ENCODE measurements at regions of chr6 and their contacts with region 1.

Region 1: GRCh38 chr6:25027221-25027916 is 91.6 kb upstream of the RIPOR2 start:
- DNase-seq: peak; percentile 83
- ATAC-seq: peak; percentile 95
- H3K4me3 ChIP-seq: peak overlapping the region in 4 of 5 experiments; percentile 14 to 56 (median 46)
- H3K4me3 Mint-ChIP-seq: peak overlapping the region; percentile 90
- H3K27ac ChIP-seq: peak overlapping the region; percentile 60 to 63
- H3K27ac Mint-ChIP-seq: peak overlapping the region; percentile 90
- H3K4me1 ChIP-seq: peaks cover 16 to 18% of the 10 kb centered on the region in 2 donors
- H3K4me1 Mint-ChIP-seq: peaks cover 40% of the 10 kb centered on the region
- H3K27me3 ChIP-seq: no peaks in the 10 kb centered on the region
- H3K27me3 Mint-ChIP-seq: no peaks in the 10 kb centered on the region
- CTCF ChIP-seq: peak; percentile 65

Region 2: DNA sequence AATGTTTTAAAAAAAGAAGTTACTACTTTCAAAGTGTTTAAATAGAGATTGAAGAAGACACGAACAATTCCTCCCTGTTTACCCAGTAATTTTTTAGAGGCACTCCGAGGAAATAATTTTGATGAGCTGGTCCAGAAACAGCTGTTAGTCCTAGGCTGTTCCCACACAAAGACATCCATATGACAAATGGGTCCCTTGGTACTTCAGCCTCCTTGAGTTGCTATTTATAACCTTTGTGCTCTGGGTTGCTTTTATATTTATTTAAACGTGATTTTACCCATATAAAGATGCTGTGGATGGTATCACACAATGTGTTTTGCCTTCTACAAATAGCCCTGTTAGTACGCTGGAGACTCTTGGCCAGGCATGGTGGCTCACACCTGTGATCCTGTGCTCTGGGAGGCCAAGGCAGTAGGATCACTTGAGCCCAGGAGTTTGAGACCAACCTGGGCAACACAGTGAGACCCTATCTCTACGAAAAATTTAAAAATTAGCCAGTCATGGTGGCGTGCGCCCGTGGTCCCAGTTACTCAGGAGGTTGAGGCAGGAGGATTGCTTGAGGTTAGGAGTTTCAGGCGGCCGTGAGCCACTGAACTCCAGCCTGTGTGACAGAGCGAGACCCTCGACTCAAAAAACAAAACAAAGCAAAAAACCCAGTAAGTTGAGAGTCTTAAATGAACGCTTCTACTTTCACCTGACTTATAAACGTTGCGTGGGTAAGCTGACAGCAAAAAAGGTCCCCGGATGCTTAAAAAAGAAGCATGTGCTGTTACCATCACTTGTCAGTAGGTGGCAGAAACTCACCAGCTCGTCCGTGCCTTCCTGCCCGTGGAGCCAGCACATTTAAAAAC is 171.7 kb before region 1 on chr6:
- CTCF ChIA-PET with region 1: interaction called, 82 read pairs
- POLR2A ChIA-PET with region 1: no interaction called
- intact Hi-C with region 1: no loop called
- DNase-seq: peak; percentile 86
- ATAC-seq: peak; percentile 42
- H3K4me3 ChIP-seq: no peak overlapping the region
- H3K4me3 Mint-ChIP-seq: peak overlapping the region; percentile 46
- H3K27ac ChIP-seq: peak overlapping the region; percentile 60 to 80
- H3K27ac Mint-ChIP-seq: peak overlapping the region; percentile 97
- H3K4me1 ChIP-seq: peaks cover 62% of the 10 kb centered on the region in 2 donors
- H3K4me1 Mint-ChIP-seq: peaks cover 60% of the 10 kb centered on the region
- H3K27me3 ChIP-seq: no peaks in the 10 kb centered on the region
- H3K27me3 Mint-ChIP-seq: no peaks in the 10 kb centered on the region
- CTCF ChIP-seq: peak; percentile 86

Region 3: DNA sequence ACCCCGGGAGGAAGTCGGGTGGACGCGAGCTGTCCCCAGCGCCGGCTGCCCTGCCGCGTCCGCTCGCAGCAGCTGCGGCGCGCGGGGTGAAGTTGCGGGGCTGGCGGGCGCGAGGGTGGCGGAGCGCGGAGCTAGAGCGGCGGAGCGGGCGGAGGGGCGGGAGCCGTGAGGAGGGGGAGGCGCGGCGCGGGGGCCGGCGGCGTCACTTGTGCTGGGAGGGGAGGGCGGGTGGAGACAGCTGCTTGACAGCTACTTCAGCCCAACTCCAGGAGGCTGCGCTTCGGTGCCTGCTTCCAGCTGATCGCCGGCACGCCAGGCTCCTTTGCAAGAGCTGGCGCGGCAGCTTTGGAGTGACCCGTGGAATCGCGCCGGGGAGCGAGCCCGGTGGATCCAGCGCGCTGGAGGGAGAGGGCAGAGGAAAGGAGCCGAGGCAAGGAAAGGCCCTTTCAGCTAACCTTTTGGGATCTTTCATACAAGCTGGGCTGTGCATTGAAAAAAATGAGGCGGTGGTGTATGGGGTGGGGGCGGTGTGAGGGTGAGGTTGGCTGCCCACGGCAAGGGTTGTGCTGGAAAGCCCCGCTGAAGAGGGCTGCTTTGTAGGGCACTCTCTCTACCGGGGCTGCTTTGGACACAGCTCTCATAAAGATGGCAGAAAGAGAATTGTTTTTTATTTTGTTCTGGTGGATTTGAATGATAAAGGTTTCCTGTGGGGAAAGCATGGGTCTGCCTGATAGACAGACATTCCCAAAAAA is 116.2 kb before region 1 on chr6:
- CTCF ChIA-PET with region 1: interaction called, 80 read pairs
- POLR2A ChIA-PET with region 1: no interaction called
- intact Hi-C with region 1: no loop called
- DNase-seq: no peak
- ATAC-seq: peak; percentile 38
- H3K4me3 ChIP-seq: peak overlapping the region; percentile 45 to 66 (median 58)
- H3K4me3 Mint-ChIP-seq: peak overlapping the region; percentile 90
- H3K27ac ChIP-seq: peak overlapping the region; percentile 83 to 93
- H3K27ac Mint-ChIP-seq: peak overlapping the region; percentile 89
- H3K4me1 ChIP-seq: peaks cover 97 to 98% of the 10 kb centered on the region in 2 donors
- H3K4me1 Mint-ChIP-seq: peaks cover 94% of the 10 kb centered on the region
- H3K27me3 ChIP-seq: no peaks in the 10 kb centered on the region
- H3K27me3 Mint-ChIP-seq: no peaks in the 10 kb centered on the region
- CTCF ChIP-seq: no peak

Region 4: DNA sequence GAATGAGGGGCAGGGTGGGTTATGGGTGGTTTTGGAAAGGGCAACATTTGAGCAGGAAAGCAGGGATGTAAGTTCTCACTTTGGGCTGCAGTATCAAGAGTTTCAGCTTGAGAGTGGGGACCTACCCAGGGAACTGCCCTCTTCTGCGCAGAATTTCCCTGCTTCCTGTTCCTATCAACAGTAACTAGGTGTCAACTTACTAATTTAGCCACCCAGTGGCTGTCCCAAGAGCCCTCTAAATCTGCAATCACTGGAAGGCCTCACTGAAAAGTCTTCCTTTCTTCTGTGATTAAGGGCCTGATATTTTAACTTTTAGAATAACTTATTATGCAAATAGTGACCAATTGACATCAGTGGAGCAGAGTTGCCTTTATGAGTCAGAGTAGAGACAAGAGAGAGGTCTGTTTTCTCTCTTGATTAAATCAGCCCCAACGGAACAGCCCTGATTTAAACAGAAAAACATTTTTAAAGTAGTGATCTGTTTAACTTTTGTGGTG is 26.6 kb after region 1 on chr6:
- CTCF ChIA-PET with region 1: interaction called, 88 read pairs
- POLR2A ChIA-PET with region 1: interaction called, 4 read pairs
- intact Hi-C with region 1: loop called (anchors 1 kb)
- DNase-seq: peak; percentile 79
- ATAC-seq: peak; percentile 63
- H3K4me3 ChIP-seq: peak overlapping the region in 1 of 5 experiments; percentile 3
- H3K4me3 Mint-ChIP-seq: peak overlapping the region; percentile 66
- H3K27ac ChIP-seq: peak overlapping the region; percentile 71 to 76
- H3K27ac Mint-ChIP-seq: peak overlapping the region; percentile 93
- H3K4me1 ChIP-seq: peaks cover 92 to 94% of the 10 kb centered on the region in 2 donors
- H3K4me1 Mint-ChIP-seq: peaks cover 85% of the 10 kb centered on the region
- H3K27me3 ChIP-seq: no peaks in the 10 kb centered on the region
- H3K27me3 Mint-ChIP-seq: no peaks in the 10 kb centered on the region
- CTCF ChIP-seq: peak; percentile 34

Region 5: DNA sequence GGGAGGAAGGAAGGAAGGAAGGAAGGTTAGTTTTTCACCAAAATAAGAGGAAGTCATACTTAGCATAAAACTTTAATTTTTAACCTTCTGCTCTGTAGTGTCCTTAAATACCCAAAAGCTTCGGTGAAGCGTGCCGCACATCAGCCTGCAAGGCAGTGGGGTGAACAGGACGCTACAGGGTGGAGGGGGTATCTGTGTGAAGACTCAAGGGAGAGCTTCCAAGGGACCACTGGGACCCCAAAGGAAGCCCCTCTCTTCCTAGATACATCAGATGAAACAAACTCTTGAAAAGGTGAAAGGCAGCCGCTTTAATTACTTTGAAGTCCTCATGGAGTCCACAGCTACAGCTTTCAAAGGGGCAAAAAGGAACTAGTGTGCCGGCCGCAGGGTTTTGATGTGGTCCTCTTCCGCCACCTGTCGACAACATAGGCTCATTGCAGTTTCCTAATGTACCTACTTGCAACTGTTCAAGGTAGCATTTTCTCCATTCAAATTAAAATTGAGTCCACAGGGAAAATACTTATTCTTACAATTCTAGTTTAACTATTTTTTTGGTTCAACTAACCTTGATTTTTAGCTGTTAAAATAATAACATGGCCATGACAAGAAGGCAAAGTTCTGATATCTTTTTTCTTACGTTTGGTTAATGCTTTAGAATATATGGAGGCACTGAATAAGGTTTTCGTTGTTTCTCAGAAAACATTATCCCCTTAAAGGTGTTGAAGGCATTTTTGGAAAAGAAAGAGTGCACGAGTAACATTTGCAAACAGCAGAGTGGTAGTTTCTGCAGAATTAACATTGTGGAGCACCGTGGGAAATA is 43.4 kb after region 1 on chr6:
- CTCF ChIA-PET with region 1: interaction called, 185 read pairs
- POLR2A ChIA-PET with region 1: interaction called, 14 read pairs
- intact Hi-C with region 1: loop called (anchors 1 kb)
- DNase-seq: peak; percentile 93
- ATAC-seq: peak; percentile 97
- H3K4me3 ChIP-seq: peak overlapping the region in 4 of 5 experiments; percentile 31 to 72 (median 48)
- H3K4me3 Mint-ChIP-seq: peak overlapping the region; percentile 86
- H3K27ac ChIP-seq: peak overlapping the region; percentile 74 to 80
- H3K27ac Mint-ChIP-seq: peak overlapping the region; percentile 97
- H3K4me1 ChIP-seq: peaks cover 0 to 4% of the 10 kb centered on the region in 2 donors
- H3K4me1 Mint-ChIP-seq: peaks cover 9% of the 10 kb centered on the region
- H3K27me3 ChIP-seq: no peaks in the 10 kb centered on the region
- H3K27me3 Mint-ChIP-seq: no peaks in the 10 kb centered on the region
- CTCF ChIP-seq: peak; percentile 95

Region 6: DNA sequence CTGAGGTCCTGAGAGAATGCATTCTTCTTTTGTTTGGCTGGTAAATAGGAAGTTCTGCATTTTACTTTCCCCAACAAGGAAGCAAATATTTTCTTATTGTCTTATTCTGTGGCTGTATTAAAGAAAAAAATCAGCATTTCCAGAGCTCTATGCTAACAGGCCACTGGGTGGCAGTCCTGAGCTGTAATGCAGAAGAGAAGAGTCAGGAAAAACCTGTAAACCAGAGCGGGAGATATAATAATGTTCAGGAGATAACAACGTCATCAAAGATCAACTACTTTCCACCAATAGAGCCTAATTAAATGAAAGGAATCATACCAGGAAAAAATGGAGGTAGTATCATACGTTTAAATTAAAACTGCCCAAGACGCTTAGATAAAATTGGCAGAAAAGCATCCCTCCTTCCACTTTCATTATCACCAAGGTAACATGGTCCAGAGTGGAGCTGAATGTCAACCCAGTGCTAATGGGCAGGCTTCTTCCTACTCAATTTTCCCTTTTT is 196.2 kb after region 1 on chr6:
- CTCF ChIA-PET with region 1: interaction called, 13 read pairs
- POLR2A ChIA-PET with region 1: no interaction called
- intact Hi-C with region 1: no loop called
- DNase-seq: peak; percentile 74
- ATAC-seq: peak; percentile 49
- H3K4me3 ChIP-seq: peak overlapping the region in 3 of 5 experiments; percentile 1 to 50 (median 24)
- H3K4me3 Mint-ChIP-seq: peak overlapping the region; percentile 42
- H3K27ac ChIP-seq: no peak overlapping the region
- H3K27ac Mint-ChIP-seq: no peak overlapping the region
- H3K4me1 ChIP-seq: peaks cover 0 to 3% of the 10 kb centered on the region in 2 donors
- H3K4me1 Mint-ChIP-seq: peaks cover 7% of the 10 kb centered on the region
- H3K27me3 ChIP-seq: peaks cover 0 to 3% (median 0%) of the 10 kb centered on the region in 4 experiments
- H3K27me3 Mint-ChIP-seq: peaks cover 13% of the 10 kb centered on the region
- CTCF ChIP-seq: peak; percentile 98